ENCODE measurements at regions of chr11 and their contacts with region 1.

Region 1: DNA sequence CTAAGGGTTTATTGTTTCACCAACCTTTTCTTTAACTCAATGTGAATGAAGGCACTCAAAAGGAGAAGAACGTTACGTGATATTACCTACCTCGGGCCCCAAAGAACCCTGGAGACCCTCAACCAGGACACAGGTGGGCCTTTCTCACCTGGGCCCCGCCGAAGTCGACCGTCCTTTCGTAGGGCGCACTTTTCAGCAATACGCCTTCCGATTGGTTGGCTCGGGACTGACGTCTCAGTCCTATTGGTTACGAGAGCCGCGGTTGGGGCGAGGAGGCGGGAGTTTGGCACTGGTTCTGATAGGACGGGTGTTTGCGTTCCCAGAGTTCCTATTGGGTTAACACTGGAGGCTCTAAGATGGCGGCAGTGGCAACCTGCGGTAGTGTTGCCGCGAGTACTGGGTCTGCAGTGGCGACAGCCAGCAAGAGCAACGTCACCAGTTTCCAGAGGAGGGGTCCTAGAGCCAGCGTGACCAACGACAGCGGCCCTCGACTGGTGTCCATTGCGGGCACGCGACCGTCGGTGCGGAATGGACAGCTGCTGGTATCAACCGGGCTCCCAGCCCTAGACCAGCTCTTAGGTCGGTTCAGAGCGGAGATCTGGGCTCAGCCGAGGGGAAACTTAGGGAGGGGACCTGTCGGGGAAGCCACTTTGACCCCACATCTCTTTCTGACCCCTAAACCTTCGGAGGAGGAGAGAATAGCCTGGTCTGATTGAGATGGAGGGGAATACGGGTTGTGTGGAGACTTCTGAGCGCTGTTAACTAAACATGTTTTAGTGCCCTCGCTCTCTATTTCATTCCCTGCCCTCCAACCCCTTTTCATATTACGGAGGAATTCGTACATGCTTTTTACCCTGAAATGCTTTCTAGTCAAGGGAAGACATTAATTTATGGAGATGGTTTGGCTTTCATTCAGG is at the starts of genes ELP4 and IMMP1L:
- DNase-seq: peak; percentile 98
- H3K4me3 Mint-ChIP-seq: peak within 1 kb of the TSS; percentile 99
- H3K27ac Mint-ChIP-seq: peak within 1 kb of the TSS; percentile 90
- H3K4me1 Mint-ChIP-seq: peaks cover 36% of the 10 kb centered on the region
- H3K27me3 Mint-ChIP-seq: no peaks in the 10 kb centered on the region
- total RNA-seq, gene ELP4: 20.8 to 23.8 TPM
- total RNA-seq, gene IMMP1L: 15.6 to 15.9 TPM

Region 2: DNA sequence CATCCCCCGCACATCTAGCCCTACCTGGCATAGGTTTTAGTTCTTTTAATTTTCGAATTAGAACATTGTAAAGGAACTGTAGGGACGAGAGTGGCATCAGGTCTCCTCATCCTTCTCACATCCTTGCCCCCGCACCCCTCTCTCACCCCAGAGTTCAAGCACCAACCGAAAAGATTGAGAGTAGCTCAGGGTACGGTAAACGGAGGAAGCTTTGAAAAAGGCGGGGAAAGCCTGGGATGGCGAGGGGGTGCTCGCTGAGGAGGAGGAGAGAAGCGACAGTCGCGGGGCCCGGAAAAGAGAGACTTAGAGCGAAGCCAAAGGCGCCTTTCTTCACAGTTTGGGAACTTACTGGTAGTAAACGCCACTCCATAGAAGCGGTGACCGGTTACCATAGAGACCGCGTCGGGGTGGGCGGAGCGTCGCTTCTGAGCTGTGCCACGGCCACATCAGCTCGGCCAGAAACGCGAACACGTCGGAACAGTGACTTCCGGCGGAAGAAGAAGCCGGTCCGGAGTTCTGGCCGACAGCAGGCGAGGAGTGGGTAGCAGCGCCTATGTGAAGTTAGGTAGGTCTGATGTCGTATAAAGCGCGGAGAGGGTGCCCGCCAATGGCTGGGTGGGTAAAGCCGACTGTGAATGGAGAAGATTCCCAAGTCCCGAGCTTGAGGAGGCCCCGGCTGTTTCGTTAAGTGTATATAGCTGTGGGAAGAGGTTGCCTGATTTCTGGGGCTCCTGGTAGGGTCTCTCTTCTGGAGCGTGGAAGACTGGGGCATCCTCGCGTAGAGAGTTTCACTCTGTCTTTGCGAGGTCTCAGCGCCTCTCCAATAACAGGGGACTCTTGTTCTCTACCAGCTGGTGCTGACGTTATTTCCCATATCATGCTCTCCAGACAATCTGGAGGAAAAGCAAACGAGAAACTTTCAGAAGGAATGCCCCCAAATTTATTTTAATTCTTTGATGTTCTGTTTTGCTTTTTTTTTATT is 140.0 kb before region 1 on chr11 and contains the starts of genes DCDC1 and DNAJC24:
- CTCF ChIA-PET with region 1: no interaction called
- intact Hi-C with region 1: loop called (anchors 1 kb)
- DNase-seq: peak; percentile 95
- H3K4me3 Mint-ChIP-seq: peak within 1 kb of the TSS; percentile 99
- H3K27ac Mint-ChIP-seq: peak within 1 kb of the TSS; percentile 91
- H3K4me1 Mint-ChIP-seq: peaks cover 55% of the 10 kb centered on the region
- H3K27me3 Mint-ChIP-seq: no peaks in the 10 kb centered on the region
- total RNA-seq, gene DCDC1: 0.25 TPM in 1 of 2 experiments, not detected in the other
- total RNA-seq, gene DNAJC24: 14.2 to 14.6 TPM

Region 3: DNA sequence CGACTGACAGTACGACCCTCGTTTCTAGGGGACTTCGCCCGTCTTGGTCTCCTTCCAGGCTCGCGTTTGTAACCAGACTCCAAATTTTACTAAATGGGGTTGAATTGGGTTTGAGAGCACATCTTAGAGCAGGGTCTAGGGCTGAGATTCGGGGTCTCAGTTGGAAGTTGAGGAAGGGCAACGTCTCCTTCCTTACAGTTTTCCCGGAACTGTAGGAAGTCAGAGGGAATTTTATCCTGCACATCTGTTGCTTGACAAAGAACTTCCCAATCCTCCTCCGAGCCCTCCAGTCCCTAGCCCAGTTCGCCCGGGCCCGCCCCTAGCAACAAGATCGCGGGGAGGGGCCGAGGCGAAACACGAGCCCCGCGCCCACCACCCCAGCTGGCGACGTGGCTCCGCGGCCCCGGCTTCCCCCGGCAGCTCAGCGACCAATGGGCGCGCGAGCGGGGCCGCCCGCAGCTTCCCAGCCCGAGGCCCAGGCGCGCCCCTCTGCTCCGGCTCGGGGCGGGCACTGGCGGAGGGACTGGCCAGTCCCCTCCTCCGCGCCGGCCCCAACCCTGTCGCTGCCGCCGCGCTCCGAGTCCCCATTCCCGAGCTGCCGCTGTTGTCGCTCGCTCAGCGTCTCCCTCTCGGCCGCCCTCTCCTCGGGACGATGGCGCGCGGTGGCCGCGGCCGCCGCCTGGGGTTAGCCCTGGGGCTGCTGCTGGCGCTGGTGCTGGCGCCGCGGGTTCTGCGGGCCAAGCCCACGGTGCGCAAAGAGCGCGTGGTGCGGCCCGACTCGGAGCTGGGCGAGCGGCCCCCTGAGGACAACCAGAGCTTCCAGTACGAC is 581.1 kb after region 1 on chr11 and contains the start of gene RCN1:
- CTCF ChIA-PET with region 1: no interaction called
- intact Hi-C with region 1: loop called (anchors 1 kb)
- DNase-seq: peak; percentile 43
- H3K4me3 Mint-ChIP-seq: peak within 1 kb of the TSS; percentile 79
- H3K27ac Mint-ChIP-seq: peak within 1 kb of the TSS; percentile 86
- H3K4me1 Mint-ChIP-seq: peaks cover 39% of the 10 kb centered on the region
- H3K27me3 Mint-ChIP-seq: peaks cover 4% of the 10 kb centered on the region
- total RNA-seq, gene RCN1: 24.8 to 29.6 TPM

Measured in activated naive CD4-positive, alpha-beta T cell treated with anti-CD3 and anti-CD28 coated beads for 36 hours (primary cell).